Cardiac septum (tissue), 1 donor: ENCODE measurements at regions of chr1 and their contacts with region 1.

Region 1: DNA sequence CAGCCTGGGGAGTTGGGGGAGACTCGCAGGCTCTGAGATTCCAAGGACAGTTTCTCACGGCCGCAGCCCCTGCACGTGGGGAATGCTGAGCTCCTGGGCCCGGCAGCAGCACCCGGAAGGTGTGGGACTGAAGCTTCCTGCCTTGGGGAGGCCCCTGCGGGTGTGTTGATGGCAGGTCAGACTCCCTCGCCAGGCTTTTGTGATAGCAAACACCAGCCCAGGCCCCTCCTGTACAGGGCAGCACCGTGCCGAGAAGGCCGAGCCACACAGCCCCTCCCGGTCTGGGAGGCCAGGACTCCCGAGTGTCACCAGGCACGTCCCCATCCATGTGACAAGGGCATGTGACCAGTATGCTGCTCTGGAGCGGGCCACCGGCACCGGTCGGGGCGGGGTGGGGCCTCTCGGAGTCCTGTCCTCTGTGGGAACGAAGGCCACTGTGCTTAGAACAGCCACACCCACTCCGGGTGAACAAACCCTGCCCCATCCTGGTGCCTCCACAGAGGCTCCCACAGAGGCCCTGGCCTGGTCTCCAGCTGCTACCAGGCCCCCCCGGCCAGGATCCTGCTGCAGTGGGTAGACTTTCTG is 31.1 kb upstream of the ARHGEF16 start:
- DNase-seq: peak; percentile 92

Region 2: GRCh38 chr1:2412519-2413233 is 1010.7 kb before region 1 on chr1 and contains the start of gene PEX10:
- intact Hi-C with region 1: loop called (anchors 5 kb)
- DNase-seq: peak; percentile 99
- total RNA-seq, gene PEX10: 18.1 TPM

Region 3: GRCh38 chr1:2875707-2876561 is 547.4 kb before region 1 on chr1:
- intact Hi-C with region 1: loop called (anchors 1 kb)
- DNase-seq: no peak

Region 4: GRCh38 chr1:3069491-3070303 is 353.6 kb before region 1 on chr1:
- intact Hi-C with region 1: loop called (anchors 2 kb)
- DNase-seq: peak; percentile 77

Region 5: GRCh38 chr1:3283849-3284248 is 139.5 kb before region 1 on chr1:
- intact Hi-C with region 1: loop called (anchors 5 kb)
- DNase-seq: no peak